PC-9 (cell line): ENCODE measurements at regions of chr5 and their contacts with region 1.

Region 1: GRCh38 chr5:96083361-96083881 is 121.8 kb upstream of the ELL2 start:
- DNase-seq: no peak
- H3K4me3 ChIP-seq: no peak overlapping the region
- H3K27ac ChIP-seq: no peak overlapping the region
- H3K4me1 ChIP-seq: peaks cover 53% of the 10 kb centered on the region
- H3K27me3 ChIP-seq: no peaks in the 10 kb centered on the region
- CTCF ChIP-seq: no peak

Region 2: DNA sequence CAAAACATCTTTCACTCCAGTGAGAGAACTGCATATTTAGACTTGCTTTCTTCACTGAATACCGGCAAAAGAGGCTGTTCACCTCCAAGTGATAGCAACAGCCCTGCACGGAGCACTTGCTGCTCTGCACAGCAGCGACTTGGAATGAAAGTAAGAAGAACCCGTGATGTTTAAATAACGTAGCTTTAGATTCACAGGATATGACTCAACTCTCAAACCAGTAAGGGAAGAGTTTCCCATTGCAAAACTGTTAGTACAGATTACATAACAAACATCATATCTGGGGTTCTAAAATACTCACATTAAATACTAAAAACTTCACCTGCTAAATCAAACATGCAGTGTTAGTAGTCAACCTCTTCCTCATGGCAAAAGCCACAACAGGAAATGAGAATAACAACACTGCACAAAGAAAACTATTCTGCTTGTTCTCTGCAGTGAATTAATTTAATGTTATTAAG is 1001.9 kb before region 1 on chr5:
- CTCF ChIA-PET with region 1: no interaction called
- POLR2A ChIA-PET with region 1: no interaction called
- intact Hi-C with region 1: no loop called
- DNase-seq: peak; percentile 25 to 69
- H3K4me3 ChIP-seq: peak overlapping the region; percentile 47
- H3K27ac ChIP-seq: peak overlapping the region; percentile 79
- H3K4me1 ChIP-seq: peaks cover 11% of the 10 kb centered on the region
- H3K27me3 ChIP-seq: no peaks in the 10 kb centered on the region
- CTCF ChIP-seq: no peak

Region 3: GRCh38 chr5:95956021-95956899 is 127.2 kb before region 1 on chr5:
- CTCF ChIA-PET with region 1: no interaction called
- POLR2A ChIA-PET with region 1: interaction called, 11 read pairs
- intact Hi-C with region 1: no loop called
- DNase-seq: no peak
- H3K4me3 ChIP-seq: no peak overlapping the region
- H3K27ac ChIP-seq: no peak overlapping the region
- H3K4me1 ChIP-seq: peaks cover 34% of the 10 kb centered on the region
- H3K27me3 ChIP-seq: no peaks in the 10 kb centered on the region
- CTCF ChIP-seq: no peak

Region 4: DNA sequence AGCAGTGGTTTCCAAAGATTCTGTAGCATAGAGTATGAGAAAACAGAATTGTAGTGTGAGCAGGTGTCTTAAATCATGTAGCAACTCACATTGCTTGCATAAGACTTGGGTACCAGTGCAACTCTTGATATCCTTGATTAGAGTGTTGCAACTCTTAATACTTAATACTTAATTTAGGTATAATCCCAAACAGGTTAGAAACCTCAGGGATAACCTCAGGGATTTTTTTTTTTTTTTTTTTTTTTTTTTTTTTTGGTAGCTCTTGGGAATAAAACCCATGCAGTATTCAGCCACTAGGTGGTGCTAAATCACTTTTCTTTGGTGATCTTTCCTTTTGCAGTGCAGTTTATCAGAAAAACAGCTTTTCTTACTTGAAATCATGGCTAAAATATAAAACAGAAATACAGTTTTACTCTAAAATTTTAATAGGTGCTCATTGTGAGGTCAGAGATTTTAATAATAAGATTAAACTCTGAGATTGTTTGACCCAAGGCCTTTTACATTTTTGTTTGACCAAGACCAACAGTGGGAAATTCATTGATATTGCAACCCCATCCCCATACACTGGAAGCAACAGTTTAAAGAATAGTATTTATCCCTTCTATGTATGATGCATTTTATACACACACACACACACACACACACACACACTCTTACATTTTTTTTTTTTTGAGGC is 669.1 kb after region 1 on chr5:
- CTCF ChIA-PET with region 1: no interaction called
- POLR2A ChIA-PET with region 1: no interaction called
- intact Hi-C with region 1: no loop called
- DNase-seq: peak in 1 of 2 experiments; percentile 11
- H3K4me3 ChIP-seq: no peak overlapping the region
- H3K27ac ChIP-seq: no peak overlapping the region; the same call in 1 of the 2 replicates
- H3K4me1 ChIP-seq: no peaks in the 10 kb centered on the region
- H3K27me3 ChIP-seq: no peaks in the 10 kb centered on the region
- CTCF ChIP-seq: peak; percentile 78